ENCODE measurements at regions of chr1 and their contacts with region 1.

Region 1: GRCh38 chr1:8015036-8015808 is 10.9 kb downstream of the ERRFI1 start:
- DNase-seq: peak; percentile 21
- H3K4me3 Mint-ChIP-seq: no peak overlapping the region
- H3K27ac Mint-ChIP-seq: no peak overlapping the region
- H3K4me1 Mint-ChIP-seq: peaks cover 2% of the 10 kb centered on the region
- H3K27me3 Mint-ChIP-seq: peaks cover 17% of the 10 kb centered on the region

Region 2: DNA sequence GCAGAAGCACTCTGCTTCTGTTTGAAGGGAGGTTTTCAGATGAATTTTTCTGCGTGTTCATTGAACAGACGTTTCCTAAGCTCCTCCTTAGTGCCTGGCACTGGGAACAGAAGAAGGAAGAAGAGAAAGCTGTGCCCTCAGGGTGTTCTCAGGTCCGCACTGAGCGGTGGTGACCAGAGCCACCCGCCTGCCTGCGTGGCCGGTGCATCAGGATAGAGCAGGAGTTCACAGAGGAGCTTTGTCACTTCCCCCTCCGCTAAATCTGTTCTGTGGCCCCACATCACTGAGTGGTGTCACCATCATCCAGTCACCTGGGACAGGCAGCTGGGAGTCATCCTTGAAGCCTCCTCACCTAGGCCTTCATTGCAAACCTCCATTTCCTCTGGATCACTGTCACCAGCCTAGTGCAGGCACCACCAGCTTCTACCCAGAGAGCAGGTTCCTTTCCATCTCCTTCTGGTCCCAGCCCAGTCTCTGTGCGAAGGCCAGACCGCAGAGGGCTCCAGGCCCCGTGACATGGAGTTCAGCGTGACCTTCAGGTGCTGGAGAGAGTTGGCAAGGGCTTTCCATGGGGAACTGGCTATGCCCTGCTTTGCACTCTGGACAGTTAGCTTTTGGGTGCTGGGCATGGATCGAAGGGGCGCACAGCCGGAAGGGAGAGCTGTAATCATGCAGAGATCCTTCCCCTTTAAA is 32.0 kb before region 1 on chr1:
- CTCF ChIA-PET with region 1: interaction called, 21 read pairs
- POLR2A ChIA-PET with region 1: interaction called, 4 read pairs
- intact Hi-C with region 1: no loop called
- DNase-seq: no peak
- H3K4me3 Mint-ChIP-seq: no peak overlapping the region
- H3K27ac Mint-ChIP-seq: no peak overlapping the region
- H3K4me1 Mint-ChIP-seq: peaks cover 5% of the 10 kb centered on the region
- H3K27me3 Mint-ChIP-seq: no peaks in the 10 kb centered on the region

Region 3: GRCh38 chr1:8026153-8026975 is 11.1 kb after region 1 on chr1 and contains the start of gene ERRFI1:
- CTCF ChIA-PET with region 1: interaction called, 41 read pairs
- POLR2A ChIA-PET with region 1: no interaction called
- intact Hi-C with region 1: no loop called
- DNase-seq: peak; percentile 91
- H3K4me3 Mint-ChIP-seq: peak within 1 kb of the TSS; percentile 78
- H3K27ac Mint-ChIP-seq: no peak within 1 kb of the TSS
- H3K4me1 Mint-ChIP-seq: peaks cover 12% of the 10 kb centered on the region
- H3K27me3 Mint-ChIP-seq: peaks cover 21% of the 10 kb centered on the region
- total RNA-seq, gene ERRFI1: 1.5 to 1.9 TPM

Region 4: GRCh38 chr1:8314346-8315280 is 299.4 kb after region 1 on chr1:
- CTCF ChIA-PET with region 1: interaction called, 131 read pairs
- POLR2A ChIA-PET with region 1: no interaction called
- intact Hi-C with region 1: loop called (anchors 1 kb)
- DNase-seq: peak; percentile 69
- H3K4me3 Mint-ChIP-seq: no peak overlapping the region
- H3K27ac Mint-ChIP-seq: no peak overlapping the region
- H3K4me1 Mint-ChIP-seq: peaks cover 9% of the 10 kb centered on the region
- H3K27me3 Mint-ChIP-seq: peaks cover 25% of the 10 kb centered on the region

Region 5: DNA sequence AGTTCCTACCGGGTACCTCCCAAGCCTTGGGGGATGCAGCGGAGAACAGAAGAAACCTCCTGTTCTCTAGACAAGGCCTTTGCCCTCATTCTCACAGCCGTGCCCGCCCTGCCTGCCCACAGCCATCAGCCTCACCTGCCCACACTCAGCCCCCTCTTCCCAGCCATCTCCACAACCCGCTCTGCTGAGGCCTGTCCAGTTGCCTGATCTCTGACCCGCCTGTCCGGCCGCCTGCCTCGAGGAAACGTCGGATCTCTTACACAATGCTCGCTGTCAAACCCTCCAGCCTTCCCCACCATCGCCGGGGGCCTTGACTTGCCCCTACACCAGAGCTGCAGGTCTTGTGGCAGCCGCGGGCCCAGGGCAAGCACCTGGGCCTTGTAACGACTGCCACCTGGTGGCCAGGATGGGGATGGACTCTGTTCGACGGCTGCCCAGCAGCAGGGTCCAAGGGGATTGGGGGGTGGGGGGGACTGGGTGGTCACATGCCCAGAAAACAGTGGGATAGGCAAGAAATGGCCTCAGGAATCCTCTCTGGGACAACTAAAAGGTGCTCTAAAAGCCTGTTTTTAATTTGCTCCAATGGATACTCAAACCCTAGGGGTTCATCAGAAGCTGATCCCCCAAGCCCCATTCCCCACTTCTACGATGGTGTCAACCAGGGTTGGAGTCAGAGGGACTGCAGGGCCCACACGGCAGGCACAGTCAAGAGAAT is 333.7 kb after region 1 on chr1:
- CTCF ChIA-PET with region 1: interaction called, 156 read pairs
- POLR2A ChIA-PET with region 1: interaction called, 3 read pairs
- intact Hi-C with region 1: loop called (anchors 1 kb)
- DNase-seq: peak; percentile 76
- H3K4me3 Mint-ChIP-seq: no peak overlapping the region
- H3K27ac Mint-ChIP-seq: no peak overlapping the region
- H3K4me1 Mint-ChIP-seq: peaks cover 2% of the 10 kb centered on the region
- H3K27me3 Mint-ChIP-seq: peaks cover 2% of the 10 kb centered on the region